Psoas muscle (tissue), 8 donors: ENCODE measurements at regions of chr10 and their contacts with region 1.

Region 1: DNA sequence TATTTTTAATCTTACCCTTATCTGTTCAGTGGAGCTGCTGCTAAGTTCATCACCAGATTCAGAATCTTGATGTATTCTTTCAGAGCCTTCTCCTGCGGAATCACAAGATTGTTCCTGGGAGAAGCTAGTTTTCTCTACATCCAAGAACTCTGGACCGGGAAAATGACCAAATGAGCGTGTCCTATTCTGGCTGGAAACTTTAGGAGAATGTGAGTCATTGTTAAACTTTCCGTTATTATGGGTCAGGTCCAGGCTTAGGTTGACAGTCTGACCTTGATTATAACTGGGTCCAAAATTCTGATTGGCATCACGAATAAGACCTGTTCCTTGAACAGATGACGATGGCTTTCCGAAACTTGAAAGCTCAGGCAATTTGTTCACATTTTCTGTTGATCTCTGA is 20.5 kb downstream of the ARHGAP12 start:
- DNase-seq: no peak
- ATAC-seq: peak in 1 of 4 donors; percentile 26
- H3K4me3 ChIP-seq: no peak overlapping the region
- H3K27ac ChIP-seq: no peak overlapping the region
- H3K4me1 ChIP-seq: peaks cover 36% of the 10 kb centered on the region
- H3K27me3 ChIP-seq: no peaks in the 10 kb centered on the region
- CTCF ChIP-seq: no peak

Region 2: GRCh38 chr10:31554556-31554955 is 353.6 kb before region 1 on chr10:
- intact Hi-C with region 1: no loop called
- DNase-seq: no peak
- ATAC-seq: no peak
- H3K4me3 ChIP-seq: no peak overlapping the region
- H3K27ac ChIP-seq: no peak overlapping the region
- H3K4me1 ChIP-seq: no peaks in the 10 kb centered on the region
- H3K27me3 ChIP-seq: no peaks in the 10 kb centered on the region
- CTCF ChIP-seq: no peak

Region 3: DNA sequence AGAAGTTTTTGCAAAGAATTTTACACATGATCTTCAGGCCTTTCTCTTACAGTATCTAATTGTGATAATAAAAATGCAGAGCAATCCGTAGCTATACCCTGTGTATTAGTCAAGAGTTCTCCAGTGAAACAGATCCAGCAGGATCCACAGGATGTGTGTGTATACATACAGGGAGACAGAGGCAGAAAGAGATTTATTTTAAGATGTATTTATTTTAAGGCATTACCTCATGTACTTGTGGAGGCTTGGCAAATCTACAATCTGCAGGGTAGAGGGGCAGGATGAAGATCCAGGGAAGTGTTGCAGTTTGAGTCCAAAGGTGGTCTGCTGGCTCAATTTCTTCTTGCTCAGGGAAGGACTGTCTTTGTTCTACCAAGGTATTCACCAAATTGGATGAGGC is 21.3 kb before region 1 on chr10:
- intact Hi-C with region 1: loop called in 1 of 2 experiments (anchors 1 kb)
- DNase-seq: no peak
- ATAC-seq: peak in 3 of 4 donors; percentile 28 to 64 (median 52)
- H3K4me3 ChIP-seq: no peak overlapping the region
- H3K27ac ChIP-seq: no peak overlapping the region
- H3K4me1 ChIP-seq: peaks cover 27% of the 10 kb centered on the region
- H3K27me3 ChIP-seq: no peaks in the 10 kb centered on the region
- CTCF ChIP-seq: no peak

Region 4: DNA sequence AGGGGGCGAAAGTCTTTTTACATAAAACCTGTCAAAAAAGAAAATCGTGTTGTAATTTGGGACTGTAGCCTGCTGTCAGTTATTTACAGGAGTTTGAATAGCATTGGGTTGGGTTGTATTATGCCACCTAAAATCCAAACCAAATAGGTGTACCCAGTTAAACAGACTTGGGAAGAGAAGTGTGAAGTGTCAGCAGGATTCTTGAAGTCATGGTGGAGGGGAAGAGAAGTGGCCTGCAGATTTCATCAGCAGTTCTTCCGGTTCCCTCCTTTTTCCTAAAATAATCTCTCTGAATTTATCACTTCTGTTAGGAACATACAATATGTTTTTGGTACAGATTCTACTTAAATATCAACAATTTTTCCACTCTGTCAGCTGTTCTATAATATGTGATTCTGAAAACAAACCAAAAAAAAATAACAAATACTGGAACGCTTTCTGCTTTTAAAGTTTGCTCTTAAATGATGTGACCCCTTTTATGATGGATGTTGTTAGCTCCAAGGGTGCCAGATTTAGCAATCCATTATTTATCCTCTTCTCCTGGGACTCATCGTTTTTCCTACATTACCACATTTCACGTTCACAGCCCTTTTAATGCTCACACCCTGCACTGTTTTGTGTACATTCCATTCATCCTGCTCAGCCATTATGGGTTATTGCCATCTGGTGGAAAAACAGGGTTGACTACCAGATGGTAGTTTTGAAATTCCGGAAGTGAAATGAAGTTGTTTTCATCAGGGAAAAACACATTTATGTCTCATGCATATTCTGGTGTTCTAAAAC is 39.2 kb after region 1 on chr10:
- intact Hi-C with region 1: no loop called
- DNase-seq: no peak
- ATAC-seq: peak; percentile 47 to 84 (median 68)
- H3K4me3 ChIP-seq: peak overlapping the region; percentile 27
- H3K27ac ChIP-seq: no peak overlapping the region
- H3K4me1 ChIP-seq: no peaks in the 10 kb centered on the region
- H3K27me3 ChIP-seq: no peaks in the 10 kb centered on the region
- CTCF ChIP-seq: peak; percentile 39